ENCODE measurements at regions of chr7 and their contacts with region 1.

Region 1: DNA sequence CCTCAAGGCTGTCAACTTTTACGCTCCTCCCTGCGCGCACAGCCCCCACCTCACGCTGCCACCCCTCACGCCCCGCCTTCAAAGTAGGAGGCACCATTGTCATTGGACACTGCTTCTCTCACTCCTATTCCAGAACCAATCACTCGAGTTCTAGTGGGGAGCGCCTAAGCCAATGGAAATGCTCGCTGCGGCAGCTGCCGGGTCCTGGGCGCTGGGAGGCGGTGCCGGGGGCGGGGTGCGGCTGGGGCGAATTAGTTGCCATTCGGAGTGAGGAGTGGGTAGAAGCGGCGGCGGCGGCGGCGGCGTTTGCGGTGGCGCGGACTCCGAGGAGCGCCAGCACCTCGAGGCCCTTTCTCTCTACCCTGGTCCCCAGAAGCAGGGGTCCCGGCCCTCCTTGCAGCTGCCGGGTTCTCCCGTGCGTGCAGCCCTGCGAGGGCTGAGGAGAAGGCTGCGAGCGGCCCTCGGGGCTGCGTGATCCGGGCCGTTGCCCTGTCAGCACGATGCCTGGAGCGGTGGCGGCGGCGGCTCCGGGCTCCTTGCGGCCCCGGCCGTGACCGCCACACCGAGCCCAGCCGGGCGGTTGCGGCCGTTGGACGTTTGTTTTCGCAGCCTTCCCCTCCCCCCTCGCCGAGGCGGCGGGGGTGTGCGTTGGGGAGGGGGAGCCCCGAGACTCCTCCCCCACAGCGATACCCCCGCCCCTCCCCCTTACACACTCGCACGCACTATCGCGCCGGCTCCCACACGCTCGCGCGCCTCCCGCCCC is at the start of gene GLCCI1:
- DNase-seq: peak; percentile 90 to 98 (median 97)
- ATAC-seq: peak; percentile 95
- H3K4me3 ChIP-seq: peak within 1 kb of the TSS; percentile 75
- H3K4me3 Mint-ChIP-seq: peak within 1 kb of the TSS in 9 of 10 donors; percentile 88 to 99 (median 94)
- H3K27ac ChIP-seq: peak within 1 kb of the TSS; percentile 88
- H3K27ac Mint-ChIP-seq: peak within 1 kb of the TSS; percentile 78 to 98 (median 91)
- H3K4me1 ChIP-seq: peaks cover 16 to 42% of the 10 kb centered on the region in 2 donors
- H3K4me1 Mint-ChIP-seq: peaks cover 5 to 39% (median 29%) of the 10 kb centered on the region in 7 donors
- H3K27me3 ChIP-seq: no peaks in the 10 kb centered on the region
- H3K27me3 Mint-ChIP-seq: no peaks in the 10 kb centered on the region
- total RNA-seq, gene GLCCI1: 24.9 to 43.1 (median 35.4) TPM

Region 2: DNA sequence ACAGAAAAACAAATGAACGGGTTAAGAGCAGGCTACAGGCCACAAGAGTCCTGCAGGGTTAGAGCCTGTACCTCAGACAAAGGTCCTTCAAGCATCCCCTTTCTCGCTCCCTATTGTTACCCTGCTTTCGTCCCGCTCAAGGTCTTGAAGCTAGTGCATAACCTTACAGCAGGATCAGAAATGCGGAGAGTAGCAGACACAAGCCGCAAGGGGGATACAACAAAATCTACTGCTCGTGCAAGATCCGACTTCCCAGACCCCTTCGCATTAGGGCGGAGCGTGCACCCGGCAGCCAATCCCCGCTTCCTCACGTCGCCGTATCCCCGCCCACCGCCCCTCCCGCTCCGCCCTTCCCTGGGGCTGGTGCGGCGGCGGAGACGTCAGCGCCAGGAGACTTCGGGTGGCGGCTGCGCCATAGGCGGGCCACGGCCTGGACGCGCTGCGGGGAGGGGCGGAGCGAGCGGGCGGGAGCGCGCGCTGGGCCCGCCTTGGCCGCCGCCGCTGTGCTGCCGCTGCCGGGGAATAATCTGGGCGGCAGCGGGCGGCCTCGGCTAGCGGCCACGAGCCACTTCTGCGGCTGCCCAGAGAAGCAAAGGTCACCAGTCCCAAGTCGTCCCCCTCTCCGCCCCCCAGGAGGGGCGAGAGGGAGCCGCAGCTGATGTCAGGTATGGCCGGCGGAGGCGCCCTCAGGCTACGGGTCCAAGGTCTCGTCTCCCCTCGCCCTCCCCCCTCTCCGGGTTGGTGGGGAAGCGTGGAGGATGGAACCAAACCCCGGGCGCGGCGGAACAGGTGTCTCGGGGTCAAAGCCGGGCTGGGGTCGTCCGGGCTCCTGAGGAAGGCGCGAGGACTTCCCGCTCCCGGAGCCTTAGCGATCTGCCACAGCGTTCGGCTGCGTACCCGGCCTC is 786.3 kb before region 1 on chr7 and contains the start of gene C1GALT1:
- CTCF ChIA-PET with region 1: no interaction called
- POLR2A ChIA-PET with region 1: no interaction called
- intact Hi-C with region 1: loop called (anchors 1 kb)
- DNase-seq: peak; percentile 92 to 98 (median 98)
- ATAC-seq: peak; percentile 93
- H3K4me3 ChIP-seq: peak within 1 kb of the TSS; percentile 91
- H3K4me3 Mint-ChIP-seq: peak within 1 kb of the TSS in 9 of 10 donors; percentile 87 to 97 (median 94)
- H3K27ac ChIP-seq: peak within 1 kb of the TSS; percentile 95
- H3K27ac Mint-ChIP-seq: peak within 1 kb of the TSS; percentile 93 to 100 (median 98)
- H3K4me1 ChIP-seq: peaks cover 22% of the 10 kb centered on the region in 2 donors
- H3K4me1 Mint-ChIP-seq: peaks cover 0 to 14% (median 10%) of the 10 kb centered on the region in 7 donors
- H3K27me3 ChIP-seq: no peaks in the 10 kb centered on the region
- H3K27me3 Mint-ChIP-seq: no peaks in the 10 kb centered on the region
- total RNA-seq, gene C1GALT1: 51.4 to 60.1 (median 55.6) TPM

Region 3: DNA sequence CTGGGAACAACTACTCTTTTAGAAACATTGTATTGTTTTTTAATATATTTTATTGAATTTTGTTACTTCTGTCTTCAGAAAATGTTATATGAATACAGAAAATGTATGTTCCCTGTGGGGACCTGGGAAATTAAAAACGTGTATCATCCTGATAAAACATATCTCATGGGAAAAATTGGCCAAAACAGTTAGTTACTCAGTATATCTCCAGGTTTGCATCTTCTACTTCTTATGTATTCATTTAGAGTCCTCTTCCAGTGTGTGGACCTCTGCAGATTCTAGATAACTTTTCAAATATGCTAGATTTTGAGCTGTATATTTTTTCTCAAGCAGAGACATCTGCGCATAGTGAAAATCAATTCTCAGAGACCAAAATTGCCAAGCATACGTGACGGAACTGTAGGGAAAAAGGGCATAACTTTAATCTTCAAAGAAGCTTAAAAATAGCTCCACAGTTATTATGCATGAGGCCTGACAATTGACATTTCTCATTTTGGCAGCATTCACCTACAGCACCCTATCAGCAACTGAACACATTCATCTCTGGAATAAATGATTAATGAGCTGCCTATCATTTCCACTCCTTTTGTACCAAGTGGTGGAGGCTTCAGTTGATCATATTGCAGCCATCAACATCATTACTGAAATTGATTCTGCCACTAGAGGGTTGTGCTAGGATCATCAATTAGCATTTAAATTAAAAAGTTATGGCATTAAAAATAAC is 354.5 kb before region 1 on chr7:
- CTCF ChIA-PET with region 1: no interaction called
- POLR2A ChIA-PET with region 1: no interaction called
- intact Hi-C with region 1: no loop called
- DNase-seq: no peak
- ATAC-seq: no peak
- H3K4me3 ChIP-seq: no peak overlapping the region
- H3K4me3 Mint-ChIP-seq: no peak overlapping the region
- H3K27ac ChIP-seq: no peak overlapping the region
- H3K27ac Mint-ChIP-seq: no peak overlapping the region
- H3K4me1 ChIP-seq: no peaks in the 10 kb centered on the region
- H3K4me1 Mint-ChIP-seq: peaks cover 0 to 24% (median 13%) of the 10 kb centered on the region in 7 donors
- H3K27me3 ChIP-seq: no peaks in the 10 kb centered on the region
- H3K27me3 Mint-ChIP-seq: peaks cover 0 to 5% (median 0%) of the 10 kb centered on the region in 5 donors

Region 4: GRCh38 chr7:7640221-7641128 is 328.2 kb before region 1 on chr7 and contains the start of gene UMAD1:
- CTCF ChIA-PET with region 1: no interaction called
- POLR2A ChIA-PET with region 1: interaction called, 37 read pairs
- intact Hi-C with region 1: loop called (anchors 1 kb)
- DNase-seq: peak; percentile 86 to 100 (median 99)
- ATAC-seq: peak; percentile 97
- H3K4me3 ChIP-seq: peak within 1 kb of the TSS; percentile 79
- H3K4me3 Mint-ChIP-seq: peak within 1 kb of the TSS; percentile 90 to 98 (median 96)
- H3K27ac ChIP-seq: peak within 1 kb of the TSS; percentile 98
- H3K27ac Mint-ChIP-seq: peak within 1 kb of the TSS; percentile 97 to 99 (median 98)
- H3K4me1 ChIP-seq: peaks cover 14 to 19% of the 10 kb centered on the region in 2 donors
- H3K4me1 Mint-ChIP-seq: peaks cover 31 to 67% (median 55%) of the 10 kb centered on the region in 7 donors
- H3K27me3 ChIP-seq: no peaks in the 10 kb centered on the region
- H3K27me3 Mint-ChIP-seq: no peaks in the 10 kb centered on the region
- total RNA-seq, gene UMAD1: 11.4 to 28.5 (median 14.5) TPM

Region 5: GRCh38 chr7:7920481-7920880 is 48.2 kb before region 1 on chr7:
- CTCF ChIA-PET with region 1: interaction called, 4 read pairs
- POLR2A ChIA-PET with region 1: interaction called, 4 read pairs
- intact Hi-C with region 1: loop called (anchors 2 to 5 kb)
- DNase-seq: peak in 3 of 9 donors; percentile 5 to 13 (median 7)
- ATAC-seq: peak; percentile 44
- H3K4me3 ChIP-seq: peak overlapping the region; percentile 26
- H3K4me3 Mint-ChIP-seq: peak overlapping the region in 8 of 10 donors; percentile 60 to 83 (median 70)
- H3K27ac ChIP-seq: no peak overlapping the region
- H3K27ac Mint-ChIP-seq: peak overlapping the region in 2 of 9 donors; percentile 18 to 71
- H3K4me1 ChIP-seq: peaks cover 0 to 8% of the 10 kb centered on the region in 2 donors
- H3K4me1 Mint-ChIP-seq: peaks cover 14 to 33% (median 18%) of the 10 kb centered on the region in 7 donors
- H3K27me3 ChIP-seq: no peaks in the 10 kb centered on the region
- H3K27me3 Mint-ChIP-seq: no peaks in the 10 kb centered on the region

Region 6: DNA sequence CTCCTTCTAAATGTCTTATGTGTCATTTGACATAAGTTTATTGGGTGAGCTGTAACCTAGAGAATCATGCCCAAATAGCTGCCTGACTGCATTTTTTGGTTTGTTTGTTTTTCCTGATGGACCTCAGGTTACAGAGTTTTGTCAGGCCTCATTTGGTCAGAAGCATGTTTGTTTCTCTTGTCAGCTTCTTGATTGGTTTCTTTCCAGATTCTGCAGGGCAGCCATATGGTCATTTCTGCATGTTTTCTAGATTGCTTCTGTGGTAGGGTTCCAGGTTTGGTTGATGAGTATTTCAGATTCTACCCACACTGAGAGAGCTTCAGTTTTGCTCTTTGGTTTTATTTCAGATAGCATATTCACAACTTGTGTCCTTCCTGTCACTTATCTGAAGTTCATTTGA is 27.9 kb after region 1 on chr7:
- CTCF ChIA-PET with region 1: no interaction called
- POLR2A ChIA-PET with region 1: interaction called, 33 read pairs
- intact Hi-C with region 1: no loop called
- DNase-seq: no peak
- ATAC-seq: no peak
- H3K4me3 ChIP-seq: no peak overlapping the region
- H3K4me3 Mint-ChIP-seq: peak overlapping the region in 1 of 10 donors; percentile 7
- H3K27ac ChIP-seq: no peak overlapping the region
- H3K27ac Mint-ChIP-seq: peak overlapping the region in 5 of 9 donors; percentile 6 to 44 (median 19)
- H3K4me1 ChIP-seq: peaks cover 0 to 11% of the 10 kb centered on the region in 2 donors
- H3K4me1 Mint-ChIP-seq: peaks cover 6 to 27% (median 17%) of the 10 kb centered on the region in 7 donors
- H3K27me3 ChIP-seq: no peaks in the 10 kb centered on the region
- H3K27me3 Mint-ChIP-seq: no peaks in the 10 kb centered on the region

Region 7: GRCh38 chr7:8044761-8045430 is 76.2 kb after region 1 on chr7:
- CTCF ChIA-PET with region 1: no interaction called
- POLR2A ChIA-PET with region 1: no interaction called
- intact Hi-C with region 1: loop called in 1 of 2 experiments (anchors 2 kb)
- DNase-seq: no peak
- ATAC-seq: no peak
- H3K4me3 ChIP-seq: no peak overlapping the region
- H3K4me3 Mint-ChIP-seq: peak overlapping the region in 1 of 10 donors; percentile 7
- H3K27ac ChIP-seq: no peak overlapping the region
- H3K27ac Mint-ChIP-seq: peak overlapping the region in 2 of 9 donors; percentile 38 to 74
- H3K4me1 ChIP-seq: peaks cover 0 to 5% of the 10 kb centered on the region in 2 donors
- H3K4me1 Mint-ChIP-seq: peaks cover 28 to 68% (median 61%) of the 10 kb centered on the region in 7 donors
- H3K27me3 ChIP-seq: no peaks in the 10 kb centered on the region
- H3K27me3 Mint-ChIP-seq: no peaks in the 10 kb centered on the region

Region 8: GRCh38 chr7:8176370-8177081 is 207.8 kb after region 1 on chr7:
- CTCF ChIA-PET with region 1: no interaction called
- POLR2A ChIA-PET with region 1: interaction called, 3 read pairs
- intact Hi-C with region 1: loop called (anchors 1 kb)
- DNase-seq: peak; percentile 20 to 74 (median 70)
- ATAC-seq: peak; percentile 91
- H3K4me3 ChIP-seq: peak overlapping the region; percentile 44
- H3K4me3 Mint-ChIP-seq: peak overlapping the region; percentile 73 to 86 (median 77)
- H3K27ac ChIP-seq: peak overlapping the region; percentile 72
- H3K27ac Mint-ChIP-seq: peak overlapping the region; percentile 88 to 97 (median 96)
- H3K4me1 ChIP-seq: peaks cover 48 to 50% of the 10 kb centered on the region in 2 donors
- H3K4me1 Mint-ChIP-seq: peaks cover 36 to 70% (median 67%) of the 10 kb centered on the region in 7 donors
- H3K27me3 ChIP-seq: no peaks in the 10 kb centered on the region
- H3K27me3 Mint-ChIP-seq: no peaks in the 10 kb centered on the region

Measured in naive thymus-derived CD4-positive, alpha-beta T cell (primary cell).